Uterus (tissue), 4 donors: ENCODE measurements at regions of chr3 and their contacts with region 1.

Region 1: GRCh38 chr3:63240381-63240917 is 37.7 kb upstream of the SYNPR start:
- DNase-seq: no peak
- H3K4me3 ChIP-seq: no peak overlapping the region
- H3K27ac ChIP-seq: no peak overlapping the region
- H3K4me1 ChIP-seq: no peaks in the 10 kb centered on the region
- H3K27me3 ChIP-seq: no peaks in the 10 kb centered on the region
- CTCF ChIP-seq: no peak
- POLR2A ChIP-seq: no peak

Region 2: DNA sequence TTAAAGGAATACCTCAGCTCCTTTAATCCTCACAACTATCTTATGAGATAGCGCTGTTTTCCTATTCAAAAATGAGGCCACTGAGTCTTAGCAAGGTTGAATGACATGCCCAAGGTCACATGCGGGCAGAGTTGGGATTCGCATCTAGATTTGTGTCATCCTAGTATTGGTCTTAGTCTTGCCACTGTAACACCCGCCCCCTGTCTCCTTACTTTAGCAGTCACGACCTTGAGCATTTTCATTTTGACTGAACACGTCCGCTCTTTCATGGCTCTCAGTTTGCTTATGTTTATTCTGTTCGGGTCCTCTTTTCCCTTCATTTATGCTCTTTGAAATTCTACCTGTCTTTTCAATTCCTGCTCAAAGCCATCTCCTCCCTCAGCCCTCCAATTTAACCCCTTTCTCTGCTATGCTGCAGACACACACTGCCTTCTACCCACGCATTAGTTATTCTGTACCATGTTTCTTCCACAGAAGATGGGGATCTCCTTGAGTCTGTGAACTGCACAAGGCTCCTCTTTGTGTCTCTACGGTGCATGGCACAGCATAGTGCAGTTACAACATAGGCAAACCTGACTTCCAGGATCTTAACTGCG is 252.6 kb before region 1 on chr3:
- intact Hi-C with region 1: no loop called
- DNase-seq: no peak
- H3K4me3 ChIP-seq: no peak overlapping the region
- H3K27ac ChIP-seq: no peak overlapping the region
- H3K4me1 ChIP-seq: no peaks in the 10 kb centered on the region
- H3K27me3 ChIP-seq: no peaks in the 10 kb centered on the region
- CTCF ChIP-seq: no peak
- POLR2A ChIP-seq: no peak

Region 3: GRCh38 chr3:63295816-63296215 is 55.4 kb after region 1 on chr3:
- intact Hi-C with region 1: no loop called
- DNase-seq: no peak
- H3K4me3 ChIP-seq: no peak overlapping the region
- H3K27ac ChIP-seq: no peak overlapping the region
- H3K4me1 ChIP-seq: no peaks in the 10 kb centered on the region
- H3K27me3 ChIP-seq: no peaks in the 10 kb centered on the region
- CTCF ChIP-seq: no peak
- POLR2A ChIP-seq: no peak

Region 4: DNA sequence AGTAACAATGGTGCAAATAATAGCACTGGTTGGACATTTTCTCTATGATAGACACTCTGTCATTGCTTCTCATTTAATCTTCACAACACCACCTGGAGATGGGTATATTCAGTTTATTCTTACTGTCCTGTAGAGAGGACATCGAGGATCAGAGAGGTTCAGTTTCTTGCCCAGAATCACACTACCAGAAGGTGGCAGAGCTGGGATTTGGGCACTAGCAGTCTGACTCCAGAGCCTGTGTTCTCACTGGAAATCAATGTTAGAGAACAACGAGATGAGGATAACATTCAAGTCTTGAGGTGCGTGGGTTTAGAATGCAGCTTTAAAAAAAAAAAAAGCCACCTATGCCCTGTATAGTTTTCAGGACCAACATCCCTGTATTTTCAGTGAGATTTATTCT is 165.4 kb after region 1 on chr3:
- intact Hi-C with region 1: loop called (anchors 5 kb)
- DNase-seq: no peak
- H3K4me3 ChIP-seq: no peak overlapping the region
- H3K27ac ChIP-seq: no peak overlapping the region
- H3K4me1 ChIP-seq: no peaks in the 10 kb centered on the region
- H3K27me3 ChIP-seq: no peaks in the 10 kb centered on the region
- CTCF ChIP-seq: no peak
- POLR2A ChIP-seq: no peak